Ascending aorta (tissue), 2 donors: ENCODE measurements at regions of chr9 and their contacts with region 1.

Region 1: GRCh38 chr9:137046098-137046787 is at the start of gene NPDC1:
- DNase-seq: peak in 1 of 2 donors; percentile 87
- H3K4me3 ChIP-seq: peak within 1 kb of the TSS; percentile 72 to 81
- H3K27ac ChIP-seq: peak within 1 kb of the TSS; percentile 29 to 49
- H3K4me1 ChIP-seq: peaks cover 5 to 20% of the 10 kb centered on the region in 2 donors
- H3K27me3 ChIP-seq: peaks cover 18% of the 10 kb centered on the region
- CTCF ChIP-seq: peak; percentile 75 to 83 (median 78)
- total RNA-seq, gene NPDC1: 579 TPM

Region 2: DNA sequence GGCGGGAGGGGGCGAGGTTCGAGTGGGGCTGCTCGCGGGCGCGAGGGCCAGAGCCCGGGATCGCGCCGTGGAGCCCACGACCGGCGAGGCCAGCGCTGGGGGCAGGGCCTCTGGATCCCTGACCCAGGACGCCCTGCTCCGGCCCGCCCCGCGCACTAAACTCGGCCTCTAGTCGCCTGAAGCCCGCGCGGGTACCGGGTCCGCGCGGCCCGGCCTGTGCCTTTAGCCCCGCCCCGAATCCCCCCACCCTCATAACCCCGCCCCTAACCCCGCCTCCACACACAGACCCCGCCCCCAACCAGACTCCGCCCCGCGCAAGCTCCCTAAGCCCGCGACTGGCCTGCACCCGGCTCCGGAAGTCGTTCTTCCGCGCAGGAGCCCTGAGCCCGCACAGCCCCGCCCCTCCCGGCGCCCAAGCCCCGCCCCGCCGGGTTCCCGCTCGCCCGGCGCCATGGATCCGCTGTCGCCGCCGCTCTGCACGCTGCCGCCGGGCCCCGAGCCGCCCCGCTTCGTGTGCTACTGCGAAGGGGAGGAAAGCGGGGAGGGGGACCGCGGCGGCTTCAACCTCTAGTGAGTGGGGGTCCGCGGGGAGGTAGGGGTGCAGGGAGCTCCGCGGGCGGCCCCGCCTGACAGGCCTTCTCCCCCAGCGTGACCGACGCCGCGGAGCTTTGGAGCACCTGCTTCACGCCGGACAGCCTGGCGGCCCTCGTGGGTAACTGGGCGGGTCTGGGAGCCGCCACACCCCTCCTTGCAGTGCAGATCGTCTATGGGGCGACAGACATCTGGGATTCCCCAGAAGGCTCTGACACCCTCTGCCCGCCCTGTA is 54.0 kb before region 1 on chr9 and contains the start of gene PAXX:
- intact Hi-C with region 1: no loop called
- DNase-seq: peak; percentile 57 to 93
- H3K4me3 ChIP-seq: peak within 1 kb of the TSS; percentile 79 to 85
- H3K27ac ChIP-seq: peak within 1 kb of the TSS; percentile 66 to 83
- H3K4me1 ChIP-seq: peaks cover 21 to 29% of the 10 kb centered on the region in 2 donors
- H3K27me3 ChIP-seq: no peaks in the 10 kb centered on the region
- CTCF ChIP-seq: no peak
- total RNA-seq, gene PAXX: 87.0 TPM

Region 3: GRCh38 chr9:137064027-137064879 is 18.0 kb after region 1 on chr9:
- intact Hi-C with region 1: loop called (anchors 2 kb)
- DNase-seq: no peak
- H3K4me3 ChIP-seq: no peak overlapping the region
- H3K27ac ChIP-seq: no peak overlapping the region
- H3K4me1 ChIP-seq: peaks cover 0 to 3% of the 10 kb centered on the region in 2 donors
- H3K27me3 ChIP-seq: peaks cover 9% of the 10 kb centered on the region
- CTCF ChIP-seq: peak; percentile 85 to 99 (median 98)

Region 4: DNA sequence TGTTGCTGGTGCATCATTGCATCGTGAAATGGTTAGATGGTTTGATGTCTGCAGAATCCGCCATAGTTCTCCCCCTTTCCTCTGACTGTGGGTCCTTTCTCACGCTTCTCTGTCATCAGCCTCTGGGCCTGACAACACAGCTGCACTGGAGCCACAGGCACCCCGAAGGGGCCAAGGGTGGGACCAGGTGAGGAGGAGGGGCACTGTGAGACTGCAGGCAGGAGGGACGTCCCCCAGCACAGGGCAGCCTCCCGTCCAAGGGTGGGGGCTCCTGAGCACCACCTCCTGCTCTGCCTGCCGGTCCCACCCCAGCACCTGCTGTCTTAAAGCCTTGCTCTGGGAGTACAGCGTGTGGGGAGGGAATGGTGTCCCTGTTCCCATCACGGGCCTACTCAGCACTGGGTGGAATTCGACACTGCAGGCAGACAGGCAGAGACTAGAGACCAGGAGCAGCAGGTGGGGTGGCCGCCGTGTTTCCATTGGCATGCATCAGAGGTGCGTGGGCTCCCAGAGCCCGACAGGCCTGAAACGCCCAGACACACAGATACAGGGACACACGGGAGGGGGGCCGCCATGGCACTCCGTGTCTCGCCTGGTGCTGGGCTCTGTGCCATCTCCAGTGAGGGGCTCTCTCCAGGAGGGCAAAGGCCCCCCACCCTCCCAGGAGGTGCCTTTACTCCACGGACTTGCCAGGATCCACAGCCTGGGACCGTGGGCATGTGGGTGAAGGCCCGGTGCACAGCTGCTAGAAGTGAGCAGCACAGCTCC is 846.4 kb after region 1 on chr9:
- intact Hi-C with region 1: no loop called
- DNase-seq: peak in 1 of 2 donors; percentile 53
- H3K4me3 ChIP-seq: no peak overlapping the region
- H3K27ac ChIP-seq: no peak overlapping the region
- H3K4me1 ChIP-seq: no peaks in the 10 kb centered on the region
- H3K27me3 ChIP-seq: no peaks in the 10 kb centered on the region
- CTCF ChIP-seq: no peak